SK-N-SH (cell line): ENCODE measurements at regions of chr4 and their contacts with region 1.

Region 1: GRCh38 chr4:48085821-48086607 is 48.0 kb downstream of the TXK start:
- DNase-seq: no peak
- H3K4me3 ChIP-seq: no peak overlapping the region
- H3K27ac ChIP-seq: no peak overlapping the region
- H3K4me1 ChIP-seq: peaks cover 0 to 7% of the 10 kb centered on the region in 2 experiments; a peak in 1 of 4 replicates
- H3K27me3 ChIP-seq: no peaks in the 10 kb centered on the region
- CTCF ChIP-seq: no peak
- EP300 ChIP-seq: no peak
- RAD21 ChIP-seq: no peak

Region 2: GRCh38 chr4:47088298-47088697 is 997.7 kb before region 1 on chr4:
- CTCF ChIA-PET with region 1: no interaction called
- POLR2A ChIA-PET with region 1: no interaction called
- DNase-seq: no peak
- H3K4me3 ChIP-seq: no peak overlapping the region
- H3K27ac ChIP-seq: no peak overlapping the region
- H3K4me1 ChIP-seq: no peaks in the 10 kb centered on the region
- H3K27me3 ChIP-seq: peaks cover 18% of the 10 kb centered on the region
- CTCF ChIP-seq: no peak
- EP300 ChIP-seq: no peak
- RAD21 ChIP-seq: no peak

Region 3: DNA sequence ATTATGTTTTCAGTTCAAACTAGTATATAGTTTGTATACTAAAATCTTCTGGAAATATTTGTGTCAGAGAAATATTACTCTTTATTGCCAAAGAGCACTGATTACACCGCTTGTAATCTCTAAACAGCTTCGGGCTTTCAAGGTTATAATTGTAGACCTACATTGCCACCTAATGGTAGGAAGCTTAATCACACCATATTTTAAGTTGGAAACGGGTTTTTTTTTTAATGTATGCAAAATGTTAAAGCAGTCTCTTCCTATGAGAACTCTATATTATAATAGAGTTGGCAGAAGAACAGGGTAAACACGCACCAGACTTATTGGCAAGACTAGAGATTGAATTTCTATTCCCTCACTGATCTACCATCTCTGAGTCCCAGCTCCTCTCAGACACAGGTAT is 152.2 kb before region 1 on chr4:
- CTCF ChIA-PET with region 1: interaction called, 13 read pairs
- POLR2A ChIA-PET with region 1: no interaction called
- DNase-seq: peak; percentile 36
- H3K4me3 ChIP-seq: no peak overlapping the region; a peak in 1 of 4 replicates
- H3K27ac ChIP-seq: no peak overlapping the region
- H3K4me1 ChIP-seq: peaks cover 11 to 15% of the 10 kb centered on the region in 2 experiments
- H3K27me3 ChIP-seq: no peaks in the 10 kb centered on the region
- CTCF ChIP-seq: peak; percentile 78
- EP300 ChIP-seq: no peak
- RAD21 ChIP-seq: peak; percentile 86

Region 4: DNA sequence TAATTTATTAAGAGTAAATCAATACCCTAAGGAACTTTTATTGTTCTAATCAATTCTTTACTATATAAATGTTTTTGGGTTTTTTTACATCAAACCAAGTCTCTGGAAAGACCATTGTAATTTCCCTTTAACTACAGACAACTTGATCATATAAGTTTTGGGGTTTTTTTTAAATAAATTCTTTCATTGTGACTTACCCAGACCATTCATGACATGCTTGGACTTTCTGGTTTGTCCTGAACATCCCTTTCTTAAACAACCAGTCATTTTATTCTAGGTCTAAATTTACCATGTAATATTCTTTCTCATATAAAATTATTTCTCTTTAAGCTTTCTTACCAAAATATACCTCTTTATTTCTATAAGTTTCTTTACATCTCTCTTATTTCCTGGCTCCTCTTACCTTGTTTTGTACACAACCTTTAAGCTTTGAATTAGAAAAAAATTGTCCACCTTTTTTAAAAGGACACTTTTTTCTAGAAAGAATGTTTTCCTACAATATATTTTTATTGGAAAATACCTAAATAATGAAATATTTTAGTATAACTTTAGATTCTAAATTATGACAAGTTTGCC is 77.9 kb before region 1 on chr4:
- CTCF ChIA-PET with region 1: interaction called, 11 read pairs
- POLR2A ChIA-PET with region 1: no interaction called
- DNase-seq: no peak
- H3K4me3 ChIP-seq: no peak overlapping the region
- H3K27ac ChIP-seq: no peak overlapping the region
- H3K4me1 ChIP-seq: no peaks in the 10 kb centered on the region
- H3K27me3 ChIP-seq: no peaks in the 10 kb centered on the region
- CTCF ChIP-seq: no peak
- EP300 ChIP-seq: no peak
- RAD21 ChIP-seq: no peak

Region 5: DNA sequence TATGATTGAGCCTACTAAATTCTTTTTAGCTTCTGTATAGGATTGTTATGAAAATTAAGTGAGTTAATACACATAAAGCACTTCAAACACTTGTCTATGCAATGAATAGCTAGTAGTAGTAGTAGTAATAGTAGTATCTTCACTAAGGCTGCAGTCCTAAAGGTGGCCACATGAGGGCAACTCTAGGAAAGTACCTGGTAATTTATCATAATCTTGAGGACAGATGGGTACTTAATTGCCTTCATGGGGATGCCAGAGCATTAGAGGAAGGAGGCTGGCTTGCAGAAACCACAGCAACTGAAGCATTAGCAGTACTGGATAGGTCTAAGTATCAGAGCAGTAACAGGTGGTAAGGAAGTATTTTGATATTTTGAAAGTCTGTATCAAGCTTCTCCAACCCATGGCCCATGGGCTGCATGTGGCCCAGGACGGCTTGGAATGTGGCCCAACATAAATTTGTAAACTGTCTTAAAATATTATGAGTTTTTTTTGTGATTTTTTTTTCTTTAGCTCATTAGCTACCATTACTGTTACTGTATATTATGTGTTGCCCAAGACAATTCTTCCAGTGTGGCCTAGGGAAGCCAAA is 52.1 kb before region 1 on chr4:
- CTCF ChIA-PET with region 1: interaction called, 19 read pairs
- POLR2A ChIA-PET with region 1: no interaction called
- DNase-seq: peak; percentile 40
- H3K4me3 ChIP-seq: no peak overlapping the region
- H3K27ac ChIP-seq: no peak overlapping the region
- H3K4me1 ChIP-seq: no peaks in the 10 kb centered on the region
- H3K27me3 ChIP-seq: no peaks in the 10 kb centered on the region
- CTCF ChIP-seq: peak; percentile 65
- EP300 ChIP-seq: no peak
- RAD21 ChIP-seq: peak; percentile 36